Psoas muscle (tissue), 8 donors: ENCODE measurements at regions of chr21 and their contacts with region 1.

Region 1: GRCh38 chr21:44051462-44051941 is 39.4 kb downstream of the TRAPPC10 start:
- DNase-seq: peak; percentile 33 to 71
- ATAC-seq: peak; percentile 75 to 82 (median 78)
- H3K4me3 ChIP-seq: peak overlapping the region; percentile 16
- H3K27ac ChIP-seq: peak overlapping the region; percentile 81
- H3K4me1 ChIP-seq: peaks cover 37% of the 10 kb centered on the region
- H3K27me3 ChIP-seq: no peaks in the 10 kb centered on the region
- CTCF ChIP-seq: no peak

Region 2: GRCh38 chr21:44011980-44012527 is 39.4 kb before region 1 on chr21 and contains the start of gene TRAPPC10:
- intact Hi-C with region 1: loop called (anchors 5 kb)
- DNase-seq: peak; percentile 87 to 92
- ATAC-seq: peak; percentile 92 to 95 (median 92)
- H3K4me3 ChIP-seq: peak within 1 kb of the TSS; percentile 99
- H3K27ac ChIP-seq: peak within 1 kb of the TSS; percentile 98
- H3K4me1 ChIP-seq: peaks cover 36% of the 10 kb centered on the region
- H3K27me3 ChIP-seq: no peaks in the 10 kb centered on the region
- CTCF ChIP-seq: no peak
- total RNA-seq, gene TRAPPC10: 13.3 to 22.2 (median 20.4) TPM